Aorta (tissue), 5 donors: ENCODE measurements at regions of chr7 and their contacts with region 1.

Region 1: GRCh38 chr7:128425850-128426249 is 16.1 kb upstream of the IMPDH1 start:
- DNase-seq: peak; percentile 80 to 87
- ATAC-seq: peak; percentile 81
- H3K4me3 ChIP-seq: no peak overlapping the region
- H3K27ac ChIP-seq: no peak overlapping the region
- H3K4me1 ChIP-seq: no peaks in the 10 kb centered on the region
- H3K27me3 ChIP-seq: no peaks in the 10 kb centered on the region

Region 2: GRCh38 chr7:128398016-128398840 is 27.6 kb before region 1 on chr7:
- intact Hi-C with region 1: loop called in 1 of 2 experiments (anchors 2 kb)
- DNase-seq: peak in 1 of 2 donors; percentile 86
- ATAC-seq: peak; percentile 74
- H3K4me3 ChIP-seq: no peak overlapping the region
- H3K27ac ChIP-seq: no peak overlapping the region
- H3K4me1 ChIP-seq: no peaks in the 10 kb centered on the region
- H3K27me3 ChIP-seq: no peaks in the 10 kb centered on the region

Region 3: GRCh38 chr7:128459394-128459878 is 33.6 kb after region 1 on chr7:
- intact Hi-C with region 1: loop called (anchors 1 kb)
- DNase-seq: peak in 1 of 2 donors; percentile 62
- ATAC-seq: no peak
- H3K4me3 ChIP-seq: no peak overlapping the region
- H3K27ac ChIP-seq: no peak overlapping the region
- H3K4me1 ChIP-seq: no peaks in the 10 kb centered on the region
- H3K27me3 ChIP-seq: no peaks in the 10 kb centered on the region

Region 4: GRCh38 chr7:128591705-128592104 is 165.9 kb after region 1 on chr7:
- intact Hi-C with region 1: no loop called
- DNase-seq: no peak
- ATAC-seq: no peak
- H3K4me3 ChIP-seq: no peak overlapping the region
- H3K27ac ChIP-seq: no peak overlapping the region
- H3K4me1 ChIP-seq: no peaks in the 10 kb centered on the region
- H3K27me3 ChIP-seq: no peaks in the 10 kb centered on the region